ENCODE measurements at regions of chr6 and their contacts with region 1.

Region 1: GRCh38 chr6:41449399-41450245 is 96.6 kb upstream of the FOXP4 start:
- DNase-seq: no peak
- ATAC-seq: no peak
- H3K4me3 Mint-ChIP-seq: no peak overlapping the region
- H3K27ac Mint-ChIP-seq: no peak overlapping the region
- H3K4me1 Mint-ChIP-seq: peaks cover 24% of the 10 kb centered on the region
- H3K27me3 Mint-ChIP-seq: peaks cover 30% of the 10 kb centered on the region
- CTCF ChIP-seq: no peak

Region 2: DNA sequence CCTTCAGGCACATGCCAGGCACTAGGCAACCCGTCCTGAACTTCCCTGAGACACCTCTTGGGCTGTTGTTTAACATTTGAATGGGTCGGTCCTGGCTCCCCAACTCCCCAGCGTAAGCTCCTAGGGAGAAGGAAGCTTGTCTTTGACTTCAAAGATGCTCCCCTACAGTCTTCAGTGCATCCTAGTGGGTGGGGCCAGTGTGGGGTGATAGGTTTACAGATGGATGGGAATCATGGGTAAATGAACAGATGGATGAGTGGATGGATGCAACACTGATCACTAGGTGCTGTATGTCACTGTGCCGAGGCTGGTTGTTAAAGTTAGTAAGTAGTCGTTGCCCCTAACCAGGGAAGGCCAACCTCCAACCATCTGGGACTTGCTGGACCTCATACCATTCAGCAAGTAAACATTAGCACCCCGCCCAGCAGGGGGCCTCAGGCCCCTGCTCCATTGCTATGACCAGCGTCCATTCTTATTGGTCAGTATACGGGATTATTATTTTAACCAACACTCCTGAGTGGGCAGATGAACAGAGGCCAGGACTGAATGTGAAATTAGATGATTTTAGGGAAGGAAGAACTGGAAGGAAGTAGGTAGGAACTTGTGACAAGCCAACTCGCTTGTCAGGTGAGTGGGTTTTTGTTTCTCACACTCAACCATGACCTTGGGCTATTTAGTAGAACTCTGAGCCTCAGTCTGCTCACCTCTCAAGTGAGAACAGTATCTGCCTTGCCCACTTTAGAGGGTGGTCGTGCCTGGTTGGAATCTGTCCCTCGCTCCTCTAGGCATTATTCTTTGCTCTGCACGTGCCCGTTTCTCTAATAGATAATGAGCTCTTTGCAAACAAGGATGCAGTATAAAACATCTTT is 13.7 kb after region 1 on chr6:
- CTCF ChIA-PET with region 1: interaction called, 14 read pairs
- POLR2A ChIA-PET with region 1: interaction called, 3 read pairs
- DNase-seq: no peak
- ATAC-seq: peak; percentile 80
- H3K4me3 Mint-ChIP-seq: no peak overlapping the region
- H3K27ac Mint-ChIP-seq: no peak overlapping the region
- H3K4me1 Mint-ChIP-seq: peaks cover 25% of the 10 kb centered on the region
- H3K27me3 Mint-ChIP-seq: peaks cover 72% of the 10 kb centered on the region
- CTCF ChIP-seq: no peak

Region 3: DNA sequence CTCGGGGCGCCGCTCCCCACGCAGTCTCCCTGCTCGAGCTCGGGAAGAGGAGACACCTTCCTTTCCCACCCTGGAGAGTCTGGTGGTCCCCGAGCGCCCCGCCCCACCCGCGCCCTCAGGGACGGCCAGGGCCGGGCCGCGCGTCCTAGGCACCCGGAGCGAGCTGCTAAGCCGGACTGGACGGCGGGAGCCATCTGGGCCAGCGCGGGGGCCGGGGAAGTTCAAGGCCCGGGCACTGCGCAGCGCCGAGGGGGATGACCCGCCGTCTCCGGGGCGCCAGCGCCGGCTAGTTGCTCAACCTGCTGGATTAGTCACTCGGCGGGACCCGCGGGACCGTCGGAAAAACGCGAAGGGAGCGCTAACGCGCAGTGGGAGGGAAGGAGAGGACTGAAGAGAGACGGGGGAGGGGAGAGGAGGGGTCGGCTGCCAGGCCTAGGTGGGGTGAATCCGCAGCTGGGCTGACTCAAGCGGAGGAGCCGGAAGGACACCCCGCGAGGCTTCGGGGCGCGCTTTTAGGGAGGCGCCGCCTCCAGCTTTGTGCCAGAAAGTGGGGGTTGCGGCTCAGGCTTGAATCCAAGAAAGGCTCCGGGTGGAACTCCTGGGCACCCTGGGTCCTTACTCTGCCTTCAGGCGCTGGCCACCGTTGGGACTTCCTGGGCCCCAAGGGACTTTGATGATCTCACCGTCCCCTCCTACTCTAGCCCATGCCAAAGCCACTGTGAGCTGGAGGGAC is 20.9 kb after region 1 on chr6:
- CTCF ChIA-PET with region 1: interaction called, 11 read pairs
- POLR2A ChIA-PET with region 1: interaction called, 4 read pairs
- DNase-seq: peak; percentile 54
- ATAC-seq: peak; percentile 31
- H3K4me3 Mint-ChIP-seq: peak overlapping the region; percentile 70
- H3K27ac Mint-ChIP-seq: no peak overlapping the region
- H3K4me1 Mint-ChIP-seq: peaks cover 47% of the 10 kb centered on the region
- H3K27me3 Mint-ChIP-seq: peaks cover 92% of the 10 kb centered on the region
- CTCF ChIP-seq: no peak

Measured in WTC11 (cell line).